Activated CD4-positive, alpha-beta T cell treated with anti-CD3 and anti-CD28 coated beads for 36 hours (primary cell): ENCODE measurements at regions of chr20 and their contacts with region 1.

Region 1: DNA sequence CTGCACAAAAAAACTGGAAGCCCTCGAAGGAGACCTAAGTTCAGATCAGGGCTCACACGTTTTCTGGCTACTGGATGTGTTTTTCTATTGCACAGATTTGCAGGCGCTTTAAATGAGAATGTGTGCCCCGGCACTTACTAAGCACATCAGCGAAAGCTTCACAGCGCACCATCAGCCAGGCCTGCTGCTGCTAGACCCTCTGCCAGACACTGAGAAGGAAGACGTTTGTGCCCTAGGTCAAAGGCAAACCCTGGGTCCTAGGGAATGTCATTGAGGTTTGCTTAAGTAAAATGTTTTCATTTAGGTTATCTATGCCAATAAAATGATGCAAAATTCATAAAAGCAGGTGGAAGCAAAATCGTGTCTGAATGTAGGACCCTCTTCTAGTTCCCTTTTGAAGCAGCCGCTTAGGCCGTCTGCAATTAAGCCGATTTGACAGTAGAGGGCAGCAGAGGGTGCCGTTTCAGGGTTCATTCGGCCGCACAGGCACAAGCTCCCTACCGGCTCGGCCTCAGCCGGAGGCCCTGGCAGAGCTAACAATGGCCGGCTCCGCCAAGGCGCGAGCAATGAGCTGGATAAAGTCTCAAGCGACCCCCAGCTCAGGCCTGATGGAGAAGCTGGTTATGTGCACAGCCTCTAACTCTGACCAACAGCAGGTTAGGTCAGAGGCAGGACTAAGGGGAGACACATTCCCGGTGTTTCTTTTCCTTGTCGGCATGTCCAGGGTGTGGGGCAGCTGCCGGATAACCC is 107.2 kb upstream of the FOXA2 start:
- DNase-seq: peak; percentile 72
- ATAC-seq: peak; percentile 65
- H3K4me3 Mint-ChIP-seq: no peak overlapping the region
- H3K27ac Mint-ChIP-seq: no peak overlapping the region
- H3K4me1 Mint-ChIP-seq: no peaks in the 10 kb centered on the region
- H3K27me3 Mint-ChIP-seq: peaks cover 6% of the 10 kb centered on the region

Region 2: DNA sequence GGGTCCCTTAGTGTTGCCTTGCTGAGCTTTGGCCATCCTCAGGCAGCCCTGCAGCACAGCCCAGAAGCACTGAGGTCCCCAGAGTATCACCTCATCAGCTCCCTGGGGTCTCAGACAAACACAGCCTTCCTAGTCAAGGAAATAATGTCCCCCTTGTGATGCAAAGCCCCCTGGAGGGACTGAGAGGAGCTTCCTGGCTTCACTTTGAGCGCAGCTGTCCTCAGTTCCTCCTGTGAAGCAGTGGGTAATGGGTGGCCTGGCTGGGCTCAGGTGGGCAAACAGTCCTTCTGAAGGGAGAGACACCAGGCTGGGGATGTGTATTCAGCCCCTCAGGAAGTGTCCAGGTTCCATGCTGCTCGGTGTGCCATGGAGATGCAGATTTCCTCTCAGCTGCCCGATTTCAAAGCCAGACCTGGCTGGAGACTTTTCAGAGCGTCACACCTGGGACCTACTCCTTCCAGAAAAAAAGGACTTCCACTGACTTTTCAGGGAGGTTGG is 28.0 kb before region 1 on chr20:
- CTCF ChIA-PET with region 1: no interaction called
- POLR2A ChIA-PET with region 1: no interaction called
- intact Hi-C with region 1: no loop called
- DNase-seq: no peak
- ATAC-seq: no peak
- H3K4me3 Mint-ChIP-seq: no peak overlapping the region
- H3K27ac Mint-ChIP-seq: no peak overlapping the region
- H3K4me1 Mint-ChIP-seq: no peaks in the 10 kb centered on the region
- H3K27me3 Mint-ChIP-seq: peaks cover 5% of the 10 kb centered on the region

Region 3: GRCh38 chr20:22757424-22758183 is 66.1 kb after region 1 on chr20:
- CTCF ChIA-PET with region 1: no interaction called
- POLR2A ChIA-PET with region 1: no interaction called
- intact Hi-C with region 1: no loop called
- DNase-seq: no peak
- ATAC-seq: no peak
- H3K4me3 Mint-ChIP-seq: no peak overlapping the region
- H3K27ac Mint-ChIP-seq: no peak overlapping the region
- H3K4me1 Mint-ChIP-seq: no peaks in the 10 kb centered on the region
- H3K27me3 Mint-ChIP-seq: no peaks in the 10 kb centered on the region

Region 4: DNA sequence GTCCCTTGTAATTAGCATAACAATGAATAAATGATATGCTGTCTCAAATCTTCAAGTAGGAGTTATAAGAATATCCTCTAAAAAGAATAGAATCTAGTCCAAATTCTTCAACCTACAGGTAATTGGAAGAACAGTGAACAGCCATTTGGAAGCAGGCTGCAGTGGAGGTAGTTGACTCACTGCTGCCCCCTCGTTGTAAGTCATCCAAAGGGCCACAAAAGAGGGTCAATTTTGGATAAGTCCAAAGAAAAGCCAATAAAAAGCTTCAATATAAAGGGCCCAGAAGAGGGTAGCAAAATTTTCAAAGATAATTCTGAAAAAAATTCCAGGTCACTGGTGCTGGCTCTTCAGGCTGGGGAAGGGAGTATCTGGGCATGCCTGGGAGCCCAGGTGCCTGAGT is 282.8 kb after region 1 on chr20:
- CTCF ChIA-PET with region 1: interaction called, 4 read pairs
- POLR2A ChIA-PET with region 1: no interaction called
- intact Hi-C with region 1: loop called (anchors 1 to 5 kb)
- DNase-seq: peak; percentile 17
- ATAC-seq: no peak
- H3K4me3 Mint-ChIP-seq: no peak overlapping the region
- H3K27ac Mint-ChIP-seq: no peak overlapping the region
- H3K4me1 Mint-ChIP-seq: no peaks in the 10 kb centered on the region
- H3K27me3 Mint-ChIP-seq: peaks cover 4% of the 10 kb centered on the region

Region 5: GRCh38 chr20:23050847-23051631 is 359.5 kb after region 1 on chr20:
- CTCF ChIA-PET with region 1: interaction called, 3 read pairs
- POLR2A ChIA-PET with region 1: no interaction called
- intact Hi-C with region 1: loop called in 1 of 2 experiments (anchors 10 kb)
- DNase-seq: peak; percentile 78
- ATAC-seq: peak; percentile 49
- H3K4me3 Mint-ChIP-seq: no peak overlapping the region
- H3K27ac Mint-ChIP-seq: no peak overlapping the region
- H3K4me1 Mint-ChIP-seq: peaks cover 5% of the 10 kb centered on the region
- H3K27me3 Mint-ChIP-seq: peaks cover 52% of the 10 kb centered on the region

Region 6: DNA sequence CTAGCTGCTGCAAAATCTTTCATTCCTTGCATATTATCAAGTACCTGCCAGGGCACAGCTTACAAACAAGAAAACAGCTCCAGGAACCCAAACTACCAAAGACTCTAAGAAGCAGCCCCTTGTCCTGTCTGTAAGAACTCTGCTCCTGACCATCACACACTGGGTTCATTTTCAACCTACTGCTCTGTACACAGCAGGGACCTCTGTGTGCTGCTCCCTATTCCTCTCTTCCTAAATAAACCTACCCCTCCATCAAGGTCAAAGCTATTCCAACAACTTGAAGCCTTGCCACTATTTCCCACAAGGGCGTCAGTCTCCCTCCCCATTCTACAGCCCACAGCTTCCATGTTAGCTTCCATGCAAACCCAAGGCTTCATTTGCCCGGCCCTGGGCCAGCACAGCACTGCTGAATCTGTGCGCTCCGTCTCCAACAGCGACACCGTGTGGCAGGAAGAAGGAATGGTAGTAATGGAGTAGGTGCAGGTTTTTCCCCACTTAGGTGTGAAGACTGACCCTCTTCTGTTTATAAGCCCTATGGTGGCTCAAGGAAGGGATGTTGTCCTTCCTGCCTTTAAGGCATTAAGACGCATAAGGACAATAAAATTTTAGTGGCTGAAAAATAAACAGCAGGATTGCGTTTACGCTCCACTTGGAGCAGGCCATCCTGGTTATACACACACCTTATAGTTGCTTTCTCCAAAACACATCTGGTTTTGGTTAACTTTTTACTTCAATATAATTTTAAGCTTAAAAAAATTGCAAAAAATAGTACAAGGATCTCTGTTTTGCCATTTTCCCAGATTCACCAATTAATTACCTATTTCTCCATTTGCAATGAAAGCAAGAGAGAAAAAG is 543.9 kb after region 1 on chr20:
- CTCF ChIA-PET with region 1: interaction called, 16 read pairs
- POLR2A ChIA-PET with region 1: no interaction called
- intact Hi-C with region 1: loop called in 1 of 2 experiments (anchors 1 kb)
- DNase-seq: peak; percentile 72
- ATAC-seq: peak; percentile 63
- H3K4me3 Mint-ChIP-seq: no peak overlapping the region
- H3K27ac Mint-ChIP-seq: no peak overlapping the region
- H3K4me1 Mint-ChIP-seq: no peaks in the 10 kb centered on the region
- H3K27me3 Mint-ChIP-seq: peaks cover 2% of the 10 kb centered on the region

Region 7: DNA sequence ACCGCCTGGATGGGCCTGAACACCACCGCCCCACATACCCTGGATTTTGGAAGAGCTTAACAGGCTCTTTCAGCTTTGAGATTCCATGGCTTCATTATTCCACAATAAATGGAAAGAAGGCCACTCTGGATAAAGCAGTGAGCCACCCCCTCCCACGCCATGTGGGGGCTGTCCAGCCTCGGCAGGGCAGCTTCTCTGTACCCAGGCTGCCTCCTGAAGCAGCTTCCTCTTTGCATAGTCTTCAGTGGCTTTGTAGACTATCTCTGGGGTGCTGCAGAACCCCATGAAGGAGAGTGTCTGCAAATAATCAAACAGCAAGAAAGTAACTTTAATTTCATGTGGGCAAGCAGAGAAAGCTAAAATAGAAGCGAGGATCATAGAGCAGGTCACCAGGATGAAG is 562.5 kb after region 1 on chr20:
- CTCF ChIA-PET with region 1: no interaction called
- POLR2A ChIA-PET with region 1: no interaction called
- intact Hi-C with region 1: loop called in 1 of 2 experiments (anchors 5 kb)
- DNase-seq: no peak
- ATAC-seq: no peak
- H3K4me3 Mint-ChIP-seq: no peak overlapping the region
- H3K27ac Mint-ChIP-seq: no peak overlapping the region
- H3K4me1 Mint-ChIP-seq: peaks cover 3% of the 10 kb centered on the region
- H3K27me3 Mint-ChIP-seq: peaks cover 12% of the 10 kb centered on the region

Region 8: DNA sequence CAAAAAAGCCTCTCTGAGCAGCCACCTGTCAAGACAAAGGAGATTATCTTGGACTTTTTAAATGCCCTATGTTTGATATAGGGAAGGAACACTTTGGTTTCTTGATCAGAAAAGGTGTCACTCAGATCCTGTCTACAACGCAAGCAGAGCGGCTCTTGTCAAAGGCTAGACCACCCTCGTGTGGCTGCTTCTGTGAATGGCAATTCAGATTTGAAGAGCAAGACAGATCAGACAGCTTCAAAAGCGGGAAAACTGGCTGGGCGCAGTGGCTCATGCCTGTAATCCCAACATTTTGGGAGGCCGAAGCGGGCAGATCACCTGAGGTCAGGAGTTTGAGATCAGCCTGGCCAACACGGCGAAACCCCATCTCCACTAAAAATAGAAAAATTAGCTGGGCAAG is 649.0 kb after region 1 on chr20:
- CTCF ChIA-PET with region 1: interaction called, 13 read pairs
- POLR2A ChIA-PET with region 1: no interaction called
- intact Hi-C with region 1: loop called (anchors 1 to 5 kb)
- DNase-seq: peak; percentile 61
- ATAC-seq: peak; percentile 47
- H3K4me3 Mint-ChIP-seq: no peak overlapping the region
- H3K27ac Mint-ChIP-seq: no peak overlapping the region
- H3K4me1 Mint-ChIP-seq: no peaks in the 10 kb centered on the region
- H3K27me3 Mint-ChIP-seq: no peaks in the 10 kb centered on the region